A673 (cell line): ENCODE measurements at regions of chr6 and their contacts with region 1.

Region 1: GRCh38 chr6:32529697-32530429 is at the start of gene HLA-DRB5:
- DNase-seq: no peak
- H3K4me3 ChIP-seq: no peak within 1 kb of the TSS
- H3K27ac ChIP-seq: no peak within 1 kb of the TSS
- H3K4me1 ChIP-seq: no peaks in the 10 kb centered on the region
- H3K27me3 ChIP-seq: peaks cover 5% of the 10 kb centered on the region
- CTCF ChIP-seq: no peak
- total RNA-seq, gene HLA-DRB5: not detected in 2 replicates

Region 2: GRCh38 chr6:32570363-32570905 is 40.6 kb after region 1 on chr6:
- CTCF ChIA-PET with region 1: no interaction called
- POLR2A ChIA-PET with region 1: no interaction called
- intact Hi-C with region 1: loop called (anchors 5 kb)
- DNase-seq: no peak
- H3K4me3 ChIP-seq: no peak overlapping the region
- H3K27ac ChIP-seq: no peak overlapping the region
- H3K4me1 ChIP-seq: no peaks in the 10 kb centered on the region
- H3K27me3 ChIP-seq: no peaks in the 10 kb centered on the region
- CTCF ChIP-seq: no peak